A549 (cell line): ENCODE measurements at regions of chr13 and their contacts with region 1.

Region 1: GRCh38 chr13:20869542-20869941 is 33.0 kb downstream of the XPO4 start:
- DNase-seq: no peak
- ATAC-seq: no peak
- H3K4me3 ChIP-seq: no peak overlapping the region
- H3K27ac ChIP-seq: no peak overlapping the region
- H3K4me1 ChIP-seq: no peaks in the 10 kb centered on the region
- CTCF ChIP-seq: no peak; the same call in 1 of the 3 replicates
- EP300 ChIP-seq: no peak
- POLR2A ChIP-seq: no peak
- RAD21 ChIP-seq: 0 out of 5 replicates have a peak, but pooled peaks of 1 of the 2 experiments have one; percentile 18

Region 2: GRCh38 chr13:20738616-20739015 is 130.9 kb before region 1 on chr13:
- CTCF ChIA-PET with region 1: no interaction called
- POLR2A ChIA-PET with region 1: no interaction called
- DNase-seq: no peak
- ATAC-seq: no peak
- H3K4me3 ChIP-seq: no peak overlapping the region
- H3K27ac ChIP-seq: no peak overlapping the region
- H3K4me1 ChIP-seq: no peaks in the 10 kb centered on the region
- CTCF ChIP-seq: no peak
- EP300 ChIP-seq: no peak
- POLR2A ChIP-seq: no peak
- RAD21 ChIP-seq: no peak

Region 3: GRCh38 chr13:21152251-21152899 is 282.8 kb after region 1 on chr13:
- CTCF ChIA-PET with region 1: no interaction called
- POLR2A ChIA-PET with region 1: interaction called, 10 read pairs
- DNase-seq: no peak
- ATAC-seq: no peak
- H3K4me3 ChIP-seq: no peak overlapping the region
- H3K27ac ChIP-seq: no peak overlapping the region
- H3K4me1 ChIP-seq: no peaks in the 10 kb centered on the region
- CTCF ChIP-seq: no peak
- EP300 ChIP-seq: no peak
- POLR2A ChIP-seq: no peak
- RAD21 ChIP-seq: no peak